ENCODE measurements at regions of chr2 and their contacts with region 1.

Region 1: GRCh38 chr2:226791487-226792081 is 8.0 kb downstream of the IRS1 start:
- DNase-seq: peak; percentile 81 to 97 (median 90)
- H3K4me3 ChIP-seq: peak overlapping the region; percentile 59 to 88 (median 80)
- H3K27ac ChIP-seq: peak overlapping the region in 58 of 59 donors; percentile 21 to 94 (median 84)
- H3K27me3 ChIP-seq: no peaks in the 10 kb centered on the region
- CTCF ChIP-seq: peak in 54 of 56 donors; percentile 18 to 72 (median 50)

Region 2: GRCh38 chr2:226030788-226031646 is 760.6 kb before region 1 on chr2:
- intact Hi-C with region 1: loop called (anchors 5 kb)
- DNase-seq: peak; percentile 43 to 78 (median 64)
- H3K4me3 ChIP-seq: peak overlapping the region; percentile 42 to 80 (median 64)
- H3K27ac ChIP-seq: peak overlapping the region in 58 of 59 donors; percentile 9 to 91 (median 78)
- H3K27me3 ChIP-seq: no peaks in the 10 kb centered on the region
- CTCF ChIP-seq: peak in 2 of 56 donors; percentile 6 to 9

Region 3: GRCh38 chr2:226215902-226216503 is 575.6 kb before region 1 on chr2:
- intact Hi-C with region 1: loop called in 1 of 2 experiments (anchors 10 kb)
- DNase-seq: peak in 6 of 10 donors; percentile 5 to 44 (median 42)
- H3K4me3 ChIP-seq: no peak overlapping the region
- H3K27ac ChIP-seq: no peak overlapping the region
- H3K27me3 ChIP-seq: no peaks in the 10 kb centered on the region
- CTCF ChIP-seq: peak in 55 of 56 donors; percentile 28 to 79 (median 60)

Region 4: GRCh38 chr2:226835796-226836547 is 44.4 kb after region 1 on chr2 and contains the start of gene RHBDD1:
- intact Hi-C with region 1: no loop called
- DNase-seq: peak; percentile 85 to 97 (median 94)
- H3K4me3 ChIP-seq: peak within 1 kb of the TSS; percentile 60 to 99 (median 85)
- H3K27ac ChIP-seq: peak within 1 kb of the TSS; percentile 41 to 96 (median 90)
- H3K27me3 ChIP-seq: no peaks in the 10 kb centered on the region
- CTCF ChIP-seq: peak in 38 of 56 donors; percentile 3 to 59 (median 35)
- total RNA-seq, gene RHBDD1: 36.7 to 99.9 (median 61.0) TPM